ENCODE measurements at regions of chr3 and their contacts with region 1.

Region 1: DNA sequence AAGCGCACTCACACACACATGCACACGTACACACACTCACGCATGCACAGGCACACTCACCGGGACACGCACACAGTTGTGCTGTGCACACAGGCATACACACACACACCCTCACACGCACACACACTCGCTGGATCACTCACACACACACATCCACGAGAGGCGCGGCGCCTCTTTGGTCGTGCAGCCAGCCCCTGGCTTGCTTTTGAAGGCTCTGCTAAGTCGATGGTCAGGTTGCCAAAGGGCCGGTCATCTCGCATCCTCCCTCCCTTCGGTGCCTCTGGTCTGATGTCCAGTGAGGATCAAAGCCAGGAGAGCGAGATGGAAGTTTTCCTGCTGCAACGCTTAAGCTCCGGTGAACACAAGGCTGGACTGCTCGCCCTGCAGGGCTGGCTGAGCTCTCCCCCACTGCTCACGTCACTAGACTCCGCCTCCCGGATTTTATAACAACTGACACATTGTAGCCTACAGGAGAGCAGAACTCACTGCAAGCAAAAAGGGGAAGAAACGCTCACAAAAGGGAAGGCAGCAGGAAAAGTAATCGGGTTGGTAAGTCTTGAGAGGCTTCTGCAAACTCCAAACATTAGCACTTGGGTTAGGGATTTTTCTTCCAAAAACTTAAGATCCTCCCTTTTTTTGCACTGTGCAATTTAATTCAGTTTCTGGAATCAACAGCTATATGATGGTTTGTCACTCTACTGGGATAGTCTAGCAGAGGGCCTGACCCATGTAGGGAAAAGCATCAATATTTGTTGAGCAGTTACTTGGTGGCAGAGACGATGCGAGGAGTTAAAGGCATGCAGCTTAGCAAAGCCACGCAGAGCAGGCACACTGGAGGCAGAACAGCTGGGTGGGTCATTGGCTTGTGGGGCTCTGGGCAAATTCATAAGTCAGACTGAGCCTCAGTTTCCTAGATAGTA is at the start of gene SRGAP3:
- DNase-seq: peak; percentile 92
- H3K4me3 ChIP-seq: peak within 1 kb of the TSS; percentile 58 to 94 (median 89)
- H3K27ac ChIP-seq: peak within 1 kb of the TSS; percentile 84
- H3K4me1 ChIP-seq: peaks cover 55% of the 10 kb centered on the region
- H3K27me3 ChIP-seq: no peaks in the 10 kb centered on the region
- CTCF ChIP-seq: peak; percentile 22 to 47
- total RNA-seq, gene SRGAP3: 27.2 to 50.1 TPM

Region 2: GRCh38 chr3:8987645-8988383 is 261.7 kb before region 1 on chr3:
- CTCF ChIA-PET with region 1: no interaction called
- dilution Hi-C with region 1: no loop called
- in situ Hi-C with region 1: no loop called
- intact Hi-C with region 1: loop called (anchors 1 kb)
- DNase-seq: peak; percentile 50
- H3K4me3 ChIP-seq: no peak overlapping the region
- H3K27ac ChIP-seq: no peak overlapping the region
- H3K4me1 ChIP-seq: no peaks in the 10 kb centered on the region
- H3K27me3 ChIP-seq: no peaks in the 10 kb centered on the region
- CTCF ChIP-seq: peak; percentile 73 to 74

Region 3: DNA sequence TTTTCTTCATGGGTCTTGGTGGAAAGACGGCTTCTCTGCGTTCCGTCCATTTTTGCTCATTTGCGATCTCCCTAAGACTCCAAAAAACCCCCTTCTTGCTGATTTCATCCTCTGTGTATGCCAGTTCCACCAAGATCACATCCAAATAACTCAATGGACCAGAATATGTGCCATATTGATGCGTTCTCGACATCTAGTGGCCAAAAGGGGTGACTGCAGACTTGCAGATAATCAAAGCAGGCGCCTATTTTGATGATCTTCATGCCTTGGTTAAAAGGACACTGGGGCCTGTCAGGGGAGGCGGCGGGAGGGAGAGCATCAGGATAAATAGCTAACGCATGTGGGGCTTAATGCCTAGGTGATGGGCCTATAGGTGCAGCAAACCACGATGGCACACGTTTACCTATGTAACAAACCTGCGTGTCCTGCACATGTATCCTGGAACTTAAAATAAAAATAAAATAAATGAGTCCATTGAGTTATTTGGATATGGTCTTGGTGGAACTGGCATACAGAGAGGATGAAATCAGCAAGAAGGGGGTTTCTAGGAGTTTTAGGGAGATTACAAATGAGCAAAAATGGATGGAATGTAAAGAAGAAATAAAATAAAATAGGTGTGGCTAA is 182.1 kb before region 1 on chr3:
- CTCF ChIA-PET with region 1: no interaction called
- dilution Hi-C with region 1: no loop called
- in situ Hi-C with region 1: no loop called
- intact Hi-C with region 1: no loop called
- DNase-seq: peak; percentile 23
- H3K4me3 ChIP-seq: no peak overlapping the region
- H3K27ac ChIP-seq: no peak overlapping the region
- H3K4me1 ChIP-seq: no peaks in the 10 kb centered on the region
- H3K27me3 ChIP-seq: no peaks in the 10 kb centered on the region
- CTCF ChIP-seq: peak; percentile 73 to 87

Region 4: GRCh38 chr3:9080163-9080562 is 169.4 kb before region 1 on chr3:
- CTCF ChIA-PET with region 1: no interaction called
- dilution Hi-C with region 1: no loop called
- in situ Hi-C with region 1: no loop called
- intact Hi-C with region 1: loop called (anchors 5 kb)
- DNase-seq: peak; percentile 87
- H3K4me3 ChIP-seq: no peak overlapping the region
- H3K27ac ChIP-seq: peak overlapping the region; percentile 53
- H3K4me1 ChIP-seq: peaks cover 19% of the 10 kb centered on the region
- H3K27me3 ChIP-seq: no peaks in the 10 kb centered on the region
- CTCF ChIP-seq: no peak

Region 5: GRCh38 chr3:9175455-9175854 is 74.1 kb before region 1 on chr3:
- CTCF ChIA-PET with region 1: no interaction called
- dilution Hi-C with region 1: no loop called
- in situ Hi-C with region 1: no loop called
- intact Hi-C with region 1: loop called (anchors 1 kb)
- DNase-seq: peak; percentile 85
- H3K4me3 ChIP-seq: no peak overlapping the region
- H3K27ac ChIP-seq: peak overlapping the region; percentile 92
- H3K4me1 ChIP-seq: peaks cover 54% of the 10 kb centered on the region
- H3K27me3 ChIP-seq: no peaks in the 10 kb centered on the region
- CTCF ChIP-seq: no peak

Region 6: DNA sequence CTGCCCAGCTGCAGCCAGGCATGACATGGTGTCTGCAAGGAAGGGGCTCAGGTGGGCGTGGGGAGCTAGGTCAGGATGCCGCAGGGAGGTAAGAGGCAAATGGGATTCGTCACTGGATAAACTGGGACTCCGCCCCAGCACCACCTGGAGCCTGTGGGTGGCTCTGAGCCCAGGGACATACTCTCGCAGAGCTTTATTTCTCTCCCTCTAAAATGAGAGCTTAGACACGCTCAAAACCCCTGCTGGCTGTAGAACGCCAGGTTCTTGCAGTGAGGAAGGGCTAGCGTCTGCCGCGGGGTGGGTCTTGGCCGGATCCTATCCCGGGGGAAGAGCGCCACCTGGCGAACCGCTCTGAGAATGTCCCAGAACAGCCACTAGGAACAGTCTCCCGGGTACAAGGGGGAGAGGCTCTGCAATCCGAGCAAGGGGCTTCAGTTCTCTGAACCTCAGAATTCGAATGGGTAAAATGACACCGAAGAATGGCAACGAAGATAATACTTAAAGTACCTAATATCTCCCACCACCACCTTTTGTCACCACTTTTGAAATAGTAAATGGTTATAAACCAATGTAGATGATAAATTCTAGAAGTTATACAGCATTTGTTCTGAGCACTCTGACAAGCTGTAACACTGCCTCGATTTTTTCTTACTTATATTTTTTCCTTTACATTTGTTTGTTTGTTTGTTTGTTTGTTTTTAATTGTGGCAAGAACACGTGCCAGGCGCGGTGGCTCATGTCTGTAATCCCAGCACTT is 53.1 kb after region 1 on chr3:
- CTCF ChIA-PET with region 1: interaction called, 5 read pairs
- dilution Hi-C with region 1: no loop called
- in situ Hi-C with region 1: no loop called
- intact Hi-C with region 1: loop called (anchors 1 kb)
- DNase-seq: peak; percentile 85
- H3K4me3 ChIP-seq: peak overlapping the region; percentile 15 to 45 (median 44)
- H3K27ac ChIP-seq: peak overlapping the region; percentile 53
- H3K4me1 ChIP-seq: peaks cover 22% of the 10 kb centered on the region
- H3K27me3 ChIP-seq: no peaks in the 10 kb centered on the region
- CTCF ChIP-seq: peak; percentile 75 to 88

Region 7: DNA sequence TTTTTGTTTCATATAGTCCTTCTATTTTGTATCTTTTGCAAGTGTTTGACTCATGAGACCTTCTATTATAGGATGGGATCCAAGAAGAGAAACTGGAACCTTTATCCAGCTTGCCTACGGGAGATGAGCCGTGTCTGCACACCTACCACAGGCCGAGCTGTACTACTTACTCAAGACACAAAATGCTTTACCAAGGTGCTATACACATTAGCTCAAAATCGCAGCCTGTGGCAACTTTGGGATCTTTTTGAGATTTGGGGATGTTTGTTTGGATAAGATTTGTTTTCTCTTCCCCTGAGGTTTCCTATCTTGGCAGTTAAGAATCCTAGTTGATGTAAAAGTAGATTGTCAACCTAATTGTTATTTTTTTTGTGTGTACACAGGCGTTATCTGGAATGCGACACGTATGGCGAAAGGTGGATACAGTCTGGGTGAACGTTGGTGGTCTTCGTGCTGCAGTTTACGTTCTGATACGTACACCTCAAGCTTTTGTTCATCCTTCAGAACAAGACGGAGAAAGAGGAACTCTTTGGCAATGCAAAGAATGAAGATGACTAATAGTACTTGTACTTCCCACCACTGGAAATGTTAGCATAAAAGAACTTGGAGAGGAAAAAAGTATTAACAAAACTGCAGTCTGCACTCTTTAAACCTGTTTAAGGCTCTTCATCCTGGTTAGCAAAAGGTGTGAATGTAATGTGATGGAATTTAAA is 134.8 kb after region 1 on chr3:
- CTCF ChIA-PET with region 1: no interaction called
- dilution Hi-C with region 1: no loop called
- in situ Hi-C with region 1: no loop called
- intact Hi-C with region 1: no loop called
- DNase-seq: no peak
- H3K4me3 ChIP-seq: no peak overlapping the region
- H3K27ac ChIP-seq: no peak overlapping the region
- H3K4me1 ChIP-seq: peaks cover 13% of the 10 kb centered on the region
- H3K27me3 ChIP-seq: no peaks in the 10 kb centered on the region
- CTCF ChIP-seq: no peak